ENCODE measurements at regions of chr1 and their contacts with region 1.

Region 1: GRCh38 chr1:20521960-20522861 is 14.3 kb upstream of the MUL1 start:
- DNase-seq: peak; percentile 56 to 76
- H3K4me3 ChIP-seq: no peak overlapping the region
- H3K27ac ChIP-seq: no peak overlapping the region
- H3K4me1 ChIP-seq: no peaks in the 10 kb centered on the region
- H3K27me3 ChIP-seq: no peaks in the 10 kb centered on the region
- CTCF ChIP-seq: peak; percentile 88

Region 2: GRCh38 chr1:20540281-20540680 is 18.1 kb after region 1 on chr1:
- CTCF ChIA-PET with region 1: no interaction called
- POLR2A ChIA-PET with region 1: no interaction called
- intact Hi-C with region 1: no loop called
- DNase-seq: no peak
- H3K4me3 ChIP-seq: no peak overlapping the region
- H3K27ac ChIP-seq: no peak overlapping the region
- H3K4me1 ChIP-seq: peaks cover 20% of the 10 kb centered on the region
- H3K27me3 ChIP-seq: no peaks in the 10 kb centered on the region
- CTCF ChIP-seq: no peak

Region 3: GRCh38 chr1:20560966-20561365 is 38.8 kb after region 1 on chr1:
- CTCF ChIA-PET with region 1: interaction called, 10 read pairs
- POLR2A ChIA-PET with region 1: no interaction called
- intact Hi-C with region 1: no loop called
- DNase-seq: no peak
- H3K4me3 ChIP-seq: no peak overlapping the region
- H3K27ac ChIP-seq: no peak overlapping the region
- H3K4me1 ChIP-seq: no peaks in the 10 kb centered on the region
- H3K27me3 ChIP-seq: no peaks in the 10 kb centered on the region
- CTCF ChIP-seq: no peak

Region 4: DNA sequence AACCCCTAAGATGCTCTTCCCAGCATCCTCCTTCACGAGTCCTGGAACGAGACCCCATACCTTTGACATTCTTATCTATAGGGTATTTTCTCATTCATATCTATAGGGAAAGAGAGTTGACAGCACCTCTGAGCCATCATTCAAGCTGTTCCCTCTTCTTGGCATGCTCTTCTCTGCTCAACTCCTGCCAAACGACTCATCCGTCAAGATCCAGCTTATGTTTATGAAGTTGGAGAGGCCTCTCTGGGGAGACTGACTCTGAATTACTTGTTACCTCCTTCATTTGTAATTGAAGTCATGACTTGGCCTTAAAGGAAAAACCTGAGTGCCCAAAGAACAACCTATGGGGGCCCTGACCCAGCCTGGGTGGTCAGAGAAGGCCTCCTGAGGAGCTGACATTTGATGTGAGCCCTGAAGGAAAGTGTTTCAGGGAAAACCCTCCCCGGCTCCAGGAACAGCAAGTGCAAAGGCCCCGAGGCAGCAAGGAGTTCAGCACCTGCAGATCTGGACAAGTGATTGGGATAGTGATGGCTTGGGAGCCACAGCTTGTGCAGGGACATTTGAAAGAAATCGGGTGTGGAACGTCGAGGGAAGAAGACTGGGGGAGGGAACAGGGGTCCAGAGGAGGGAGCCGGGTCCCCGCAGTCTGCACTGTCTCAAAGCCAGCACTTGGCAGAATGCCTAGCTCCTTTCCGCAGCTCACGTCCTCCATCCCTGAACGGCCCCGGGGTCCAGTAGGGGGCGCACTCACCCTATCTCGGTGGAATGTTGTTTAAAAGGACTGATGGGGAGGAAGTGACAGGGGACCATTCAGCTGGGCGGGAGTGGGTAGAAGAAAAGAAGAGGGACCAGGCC is 52.7 kb after region 1 on chr1:
- CTCF ChIA-PET with region 1: no interaction called
- POLR2A ChIA-PET with region 1: no interaction called
- intact Hi-C with region 1: no loop called
- DNase-seq: no peak
- H3K4me3 ChIP-seq: no peak overlapping the region
- H3K27ac ChIP-seq: no peak overlapping the region
- H3K4me1 ChIP-seq: peaks cover 34% of the 10 kb centered on the region
- H3K27me3 ChIP-seq: no peaks in the 10 kb centered on the region
- CTCF ChIP-seq: peak; percentile 26; the same call in 1 of the 2 replicates

Region 5: GRCh38 chr1:20640183-20640597 is 118.0 kb after region 1 on chr1:
- CTCF ChIA-PET with region 1: interaction called, 3 read pairs
- POLR2A ChIA-PET with region 1: interaction called, 3 read pairs
- intact Hi-C with region 1: loop called (anchors 1 kb)
- DNase-seq: peak in 1 of 2 experiments; percentile 46
- H3K4me3 ChIP-seq: no peak overlapping the region
- H3K27ac ChIP-seq: no peak overlapping the region
- H3K4me1 ChIP-seq: no peaks in the 10 kb centered on the region; the same call in 1 of the 2 replicates
- H3K27me3 ChIP-seq: no peaks in the 10 kb centered on the region
- CTCF ChIP-seq: peak; percentile 82

Region 6: DNA sequence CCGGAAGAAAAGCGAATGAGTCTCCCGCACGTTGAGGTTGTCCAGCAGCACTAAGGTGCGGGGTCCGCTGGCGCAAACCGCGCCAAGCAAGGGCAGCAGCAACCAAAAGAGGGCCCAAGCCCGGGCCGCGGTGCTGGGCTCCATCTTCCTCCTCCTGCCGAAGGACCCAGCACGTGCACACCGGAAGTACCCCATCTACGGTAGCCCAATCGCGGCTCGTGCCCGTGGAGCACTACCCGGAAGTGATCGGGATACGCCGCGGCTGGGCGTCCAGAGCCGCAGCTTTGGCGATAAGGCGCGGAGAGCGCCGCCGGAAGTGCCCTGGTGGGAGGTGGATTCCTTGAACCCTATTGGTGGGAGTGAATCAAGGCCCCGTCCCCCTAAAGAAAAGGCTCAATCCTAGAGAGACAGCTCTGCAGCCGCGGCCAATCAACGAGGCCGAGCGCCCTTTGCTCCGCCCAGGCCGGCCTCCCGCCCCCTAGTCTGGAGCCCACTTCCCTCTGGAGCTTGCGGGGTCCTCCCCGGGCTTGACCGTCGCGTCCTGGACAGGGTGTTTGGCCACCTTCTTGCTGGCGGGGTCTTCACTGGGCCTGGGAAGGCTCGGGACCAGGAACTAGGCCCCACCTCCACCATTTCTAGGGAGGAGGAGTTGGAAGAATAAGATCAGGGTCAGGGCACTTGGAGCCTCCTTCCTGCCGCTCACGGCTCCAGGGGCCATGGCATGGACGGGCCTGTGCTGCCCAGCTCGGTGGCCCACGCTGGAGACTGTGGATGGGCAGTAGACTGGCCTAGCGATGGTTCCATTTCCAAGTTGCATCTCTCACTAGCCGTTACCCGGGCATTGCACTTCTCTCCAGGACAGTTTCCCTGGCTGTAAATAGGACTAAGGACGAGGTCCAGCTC is 139.2 kb after region 1 on chr1 and contains the start of gene DDOST:
- CTCF ChIA-PET with region 1: interaction called, 10 read pairs
- POLR2A ChIA-PET with region 1: no interaction called
- intact Hi-C with region 1: no loop called
- DNase-seq: peak; percentile 91 to 94
- H3K4me3 ChIP-seq: peak within 1 kb of the TSS; percentile 92
- H3K27ac ChIP-seq: peak within 1 kb of the TSS; percentile 41
- H3K4me1 ChIP-seq: peaks cover 11% of the 10 kb centered on the region
- H3K27me3 ChIP-seq: no peaks in the 10 kb centered on the region
- CTCF ChIP-seq: no peak
- total RNA-seq, gene DDOST: 210 and 251 TPM in 2 replicates

Region 7: GRCh38 chr1:20732588-20733360 is 210.6 kb after region 1 on chr1 and contains the start of gene SH2D5:
- CTCF ChIA-PET with region 1: no interaction called
- POLR2A ChIA-PET with region 1: no interaction called
- intact Hi-C with region 1: loop called (anchors 5 kb)
- DNase-seq: peak; percentile 80 to 93
- H3K4me3 ChIP-seq: peak within 1 kb of the TSS; percentile 58
- H3K27ac ChIP-seq: peak within 1 kb of the TSS; percentile 68
- H3K4me1 ChIP-seq: peaks cover 12% of the 10 kb centered on the region
- H3K27me3 ChIP-seq: no peaks in the 10 kb centered on the region
- CTCF ChIP-seq: no peak; the same call in 1 of the 2 replicates
- total RNA-seq, gene SH2D5: 1.1 and 1.5 TPM in 2 replicates

Region 8: GRCh38 chr1:21200767-21201166 is 678.6 kb after region 1 on chr1:
- CTCF ChIA-PET with region 1: no interaction called
- POLR2A ChIA-PET with region 1: no interaction called
- intact Hi-C with region 1: loop called (anchors 1 kb)
- DNase-seq: no peak
- H3K4me3 ChIP-seq: no peak overlapping the region
- H3K27ac ChIP-seq: no peak overlapping the region
- H3K4me1 ChIP-seq: no peaks in the 10 kb centered on the region
- H3K27me3 ChIP-seq: no peaks in the 10 kb centered on the region
- CTCF ChIP-seq: no peak